ENCODE measurements at regions of chr15 and their contacts with region 1.

Region 1: GRCh38 chr15:55758580-55758986 is 15.6 kb upstream of the PRTG start:
- DNase-seq: no peak
- ATAC-seq: no peak
- H3K4me3 ChIP-seq: no peak overlapping the region
- H3K27ac ChIP-seq: no peak overlapping the region
- H3K4me1 ChIP-seq: no peaks in the 10 kb centered on the region
- H3K27me3 ChIP-seq: no peaks in the 10 kb centered on the region
- CTCF ChIP-seq: no peak
- POLR2A ChIP-seq: no peak

Region 2: DNA sequence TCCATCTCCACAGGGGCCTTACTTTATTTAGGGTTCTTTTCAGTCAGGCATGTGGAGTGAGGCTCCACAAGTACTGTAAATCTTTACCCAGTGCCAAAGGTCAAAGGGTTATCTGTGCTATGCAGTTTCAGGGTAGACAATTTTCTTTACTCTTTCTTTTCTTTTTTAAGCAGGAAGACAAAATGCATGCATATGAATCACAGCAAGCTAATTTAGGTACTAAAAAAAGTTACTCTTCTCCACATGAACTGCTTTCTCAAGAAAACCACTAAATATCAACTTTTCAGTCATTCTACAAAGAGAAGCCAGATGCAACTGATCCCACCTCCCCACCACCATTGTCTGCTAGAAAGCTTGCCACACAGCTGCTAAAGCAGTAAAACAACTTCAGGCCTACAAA is 97.2 kb before region 1 on chr15:
- intact Hi-C with region 1: loop called in 1 of 10 experiments (anchors 10 kb)
- DNase-seq: no peak
- ATAC-seq: no peak
- H3K4me3 ChIP-seq: no peak overlapping the region
- H3K27ac ChIP-seq: no peak overlapping the region
- H3K4me1 ChIP-seq: no peaks in the 10 kb centered on the region
- H3K27me3 ChIP-seq: no peaks in the 10 kb centered on the region
- CTCF ChIP-seq: no peak
- POLR2A ChIP-seq: no peak

Region 3: GRCh38 chr15:55694652-55695150 is 63.9 kb before region 1 on chr15:
- intact Hi-C with region 1: loop called in 1 of 10 experiments (anchors 10 kb)
- DNase-seq: no peak
- ATAC-seq: no peak
- H3K4me3 ChIP-seq: no peak overlapping the region
- H3K27ac ChIP-seq: no peak overlapping the region
- H3K4me1 ChIP-seq: no peaks in the 10 kb centered on the region
- H3K27me3 ChIP-seq: no peaks in the 10 kb centered on the region
- CTCF ChIP-seq: no peak
- POLR2A ChIP-seq: no peak

Region 4: GRCh38 chr15:55742927-55743728 is 15.5 kb before region 1 on chr15 and contains the start of gene PRTG:
- intact Hi-C with region 1: no loop called
- DNase-seq: peak; percentile 74 to 87 (median 79)
- ATAC-seq: peak; percentile 85 to 98 (median 95)
- H3K4me3 ChIP-seq: peak within 1 kb of the TSS; percentile 63 to 92 (median 78)
- H3K27ac ChIP-seq: peak within 1 kb of the TSS; percentile 37 to 86 (median 72)
- H3K4me1 ChIP-seq: peaks cover 0 to 25% (median 9%) of the 10 kb centered on the region in 12 donors
- H3K27me3 ChIP-seq: peaks cover 0 to 52% (median 10%) of the 10 kb centered on the region in 9 donors
- CTCF ChIP-seq: no peak
- POLR2A ChIP-seq: no peak
- total RNA-seq, gene PRTG: 0.58 to 2.1 (median 1.2) TPM

Region 5: GRCh38 chr15:56964182-56964581 is 1205.6 kb after region 1 on chr15:
- intact Hi-C with region 1: no loop called
- DNase-seq: no peak
- ATAC-seq: no peak
- H3K4me3 ChIP-seq: no peak overlapping the region
- H3K27ac ChIP-seq: no peak overlapping the region
- H3K4me1 ChIP-seq: peaks cover 0 to 65% (median 29%) of the 10 kb centered on the region in 12 donors
- H3K27me3 ChIP-seq: no peaks in the 10 kb centered on the region
- CTCF ChIP-seq: no peak
- POLR2A ChIP-seq: no peak